Naive thymus-derived CD4-positive, alpha-beta T cell (primary cell): ENCODE measurements at regions of chr9 and their contacts with region 1.

Region 1: GRCh38 chr9:6008169-6008979 is 7.0 kb downstream of the RANBP6 start:
- DNase-seq: peak; percentile 79 to 98 (median 93)
- ATAC-seq: peak; percentile 84
- H3K4me3 ChIP-seq: peak overlapping the region; percentile 75
- H3K4me3 Mint-ChIP-seq: peak overlapping the region; percentile 74 to 99 (median 94)
- H3K27ac ChIP-seq: peak overlapping the region; percentile 97
- H3K27ac Mint-ChIP-seq: peak overlapping the region; percentile 83 to 97 (median 91)
- H3K4me1 ChIP-seq: peaks cover 20 to 36% of the 10 kb centered on the region in 2 donors
- H3K4me1 Mint-ChIP-seq: peaks cover 26 to 75% (median 65%) of the 10 kb centered on the region in 7 donors
- H3K27me3 ChIP-seq: no peaks in the 10 kb centered on the region
- H3K27me3 Mint-ChIP-seq: no peaks in the 10 kb centered on the region

Region 2: DNA sequence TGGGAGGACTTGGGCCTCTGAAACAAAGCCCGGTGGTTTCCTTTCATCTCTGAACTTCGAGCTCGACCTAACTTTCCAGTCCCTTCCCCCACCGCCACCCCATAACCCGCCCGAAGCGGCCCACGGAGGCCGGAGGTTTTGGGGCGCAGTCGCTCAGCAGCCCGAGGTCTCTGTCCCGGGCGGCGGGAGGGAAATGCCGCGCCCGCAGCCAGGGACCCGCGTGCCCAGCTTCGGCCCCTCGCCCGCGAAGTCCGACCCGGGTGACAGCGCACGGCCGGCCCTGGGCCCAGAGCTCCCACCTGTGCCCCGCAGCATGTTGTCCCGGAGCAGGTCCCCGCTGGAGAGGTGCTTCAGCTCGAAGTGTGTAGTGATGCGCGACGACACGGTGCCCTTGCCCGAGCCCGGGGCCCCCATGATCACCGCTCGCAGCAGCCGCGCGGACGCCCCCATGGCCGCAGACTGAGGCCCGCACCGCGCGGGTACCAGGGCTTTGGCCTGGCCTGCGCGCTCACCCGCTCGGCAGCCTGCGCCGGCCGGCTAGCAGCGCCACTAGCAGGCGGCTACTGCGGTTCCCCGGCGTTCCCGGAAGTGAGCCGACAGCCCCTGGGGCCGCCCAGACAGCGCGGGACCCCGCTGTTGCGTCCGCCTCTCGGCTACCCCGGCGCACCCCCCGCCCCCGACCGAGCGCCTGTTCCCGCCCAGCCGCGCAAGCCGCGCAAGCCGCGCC is 1267.6 kb before region 1 on chr9 and contains the start of gene AK3:
- CTCF ChIA-PET with region 1: no interaction called
- POLR2A ChIA-PET with region 1: no interaction called
- intact Hi-C with region 1: loop called (anchors 1 to 5 kb)
- DNase-seq: peak; percentile 72 to 85 (median 83)
- ATAC-seq: peak; percentile 95
- H3K4me3 ChIP-seq: peak within 1 kb of the TSS; percentile 73
- H3K4me3 Mint-ChIP-seq: peak within 1 kb of the TSS; percentile 88 to 99 (median 94)
- H3K27ac ChIP-seq: peak within 1 kb of the TSS; percentile 86
- H3K27ac Mint-ChIP-seq: peak within 1 kb of the TSS; percentile 86 to 98 (median 93)
- H3K4me1 ChIP-seq: peaks cover 10 to 16% of the 10 kb centered on the region in 2 donors
- H3K4me1 Mint-ChIP-seq: peaks cover 22 to 49% (median 40%) of the 10 kb centered on the region in 7 donors
- H3K27me3 ChIP-seq: no peaks in the 10 kb centered on the region
- H3K27me3 Mint-ChIP-seq: no peaks in the 10 kb centered on the region
- total RNA-seq, gene AK3: 18.0 to 34.8 (median 25.8) TPM

Region 3: DNA sequence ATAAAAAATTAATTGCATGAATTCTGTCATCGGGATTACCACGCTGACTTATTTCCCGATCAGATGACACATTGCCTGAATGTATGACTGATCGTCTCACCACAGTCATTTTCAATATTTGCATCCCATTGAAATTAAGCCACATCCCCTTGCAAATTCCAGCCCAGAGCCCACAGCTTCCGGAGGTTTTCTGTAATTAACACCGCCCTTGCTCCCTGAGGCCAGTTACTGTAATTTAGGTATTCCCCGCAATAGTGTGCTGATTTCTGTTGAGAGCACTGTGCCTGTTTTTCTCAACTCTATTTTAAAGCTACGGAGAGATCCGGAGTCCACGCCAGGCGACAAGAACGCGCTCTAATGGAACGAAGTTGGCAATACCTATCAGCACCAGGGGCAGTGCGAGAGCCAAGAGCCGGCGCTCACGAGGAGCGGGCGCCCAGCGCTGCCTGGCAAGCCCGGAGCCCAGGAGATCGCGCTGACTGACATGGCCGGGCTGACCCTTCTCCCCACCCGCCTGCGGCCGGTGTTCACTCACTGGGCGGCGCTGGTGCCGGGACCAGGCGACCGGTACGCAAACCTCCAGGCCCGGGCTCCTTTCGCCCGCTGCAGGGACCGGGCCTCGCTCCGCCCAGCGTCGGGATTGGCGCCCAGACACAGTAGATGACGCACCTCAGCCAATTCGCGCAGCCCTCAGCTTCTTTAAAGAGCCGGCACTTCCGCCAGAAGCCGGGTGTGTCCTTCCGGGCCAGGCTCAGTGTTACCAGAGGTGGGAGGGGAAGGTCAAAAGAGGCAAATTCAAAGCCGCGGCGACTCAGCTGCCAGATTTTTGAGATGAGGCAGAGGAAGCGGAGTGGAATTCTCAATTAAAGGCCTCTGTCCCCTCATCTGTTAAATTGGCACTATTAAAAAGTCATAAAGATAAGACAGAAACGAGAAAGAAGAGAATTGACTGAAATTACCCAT is 570.8 kb before region 1 on chr9 and contains the start of gene PLGRKT:
- CTCF ChIA-PET with region 1: no interaction called
- POLR2A ChIA-PET with region 1: no interaction called
- intact Hi-C with region 1: loop called (anchors 1 to 5 kb)
- DNase-seq: peak; percentile 77 to 91 (median 89)
- ATAC-seq: peak; percentile 96
- H3K4me3 ChIP-seq: peak within 1 kb of the TSS; percentile 84
- H3K4me3 Mint-ChIP-seq: peak within 1 kb of the TSS; percentile 86 to 98 (median 96)
- H3K27ac ChIP-seq: peak within 1 kb of the TSS; percentile 81
- H3K27ac Mint-ChIP-seq: peak within 1 kb of the TSS; percentile 90 to 100 (median 98)
- H3K4me1 ChIP-seq: peaks cover 18 to 19% of the 10 kb centered on the region in 2 donors
- H3K4me1 Mint-ChIP-seq: peaks cover 7 to 50% (median 36%) of the 10 kb centered on the region in 7 donors
- H3K27me3 ChIP-seq: no peaks in the 10 kb centered on the region
- H3K27me3 Mint-ChIP-seq: no peaks in the 10 kb centered on the region
- total RNA-seq, gene PLGRKT: 15.8 to 31.7 (median 16.8) TPM

Region 4: DNA sequence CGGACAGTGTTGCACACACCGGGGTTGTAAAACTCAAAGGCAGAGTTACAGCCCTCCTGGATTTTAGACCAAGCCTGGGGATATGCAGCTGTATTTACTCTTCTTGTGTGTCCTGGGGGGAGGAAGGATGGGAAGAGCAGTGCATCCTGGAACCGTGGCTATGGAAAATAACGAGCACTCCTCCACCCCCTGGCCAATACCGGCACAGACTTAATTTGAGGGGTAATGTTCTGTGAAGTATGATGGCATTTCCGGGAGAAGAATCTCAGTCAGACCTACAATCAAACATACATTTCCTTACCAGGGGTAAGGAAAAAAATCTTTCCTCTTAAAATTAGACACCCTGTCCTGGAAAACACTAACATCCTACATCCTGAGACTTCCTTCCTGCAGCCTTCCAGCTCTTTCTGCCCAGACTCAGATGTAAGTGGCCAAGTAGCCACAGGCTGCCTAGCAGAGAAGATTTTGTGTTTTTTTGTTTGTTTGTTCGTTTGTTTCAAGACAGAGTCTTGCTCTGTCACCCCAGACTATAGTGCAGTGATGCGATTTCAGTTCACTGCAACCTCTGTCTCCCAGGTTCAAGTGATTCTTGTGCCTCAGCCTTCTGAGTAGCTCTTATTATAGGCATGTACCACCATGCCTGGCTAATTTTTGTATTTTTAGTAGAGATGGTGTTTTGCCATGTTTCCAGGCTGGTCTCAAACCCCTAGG is 164.4 kb before region 1 on chr9:
- CTCF ChIA-PET with region 1: no interaction called
- POLR2A ChIA-PET with region 1: interaction called, 3 read pairs
- intact Hi-C with region 1: loop called in 1 of 2 experiments (anchors 2 kb)
- DNase-seq: peak in 2 of 9 donors; percentile 7 to 22
- ATAC-seq: peak; percentile 20
- H3K4me3 ChIP-seq: peak overlapping the region; percentile 5
- H3K4me3 Mint-ChIP-seq: peak overlapping the region; percentile 75 to 85 (median 80)
- H3K27ac ChIP-seq: peak overlapping the region; percentile 24
- H3K27ac Mint-ChIP-seq: peak overlapping the region; percentile 58 to 93 (median 91)
- H3K4me1 ChIP-seq: peaks cover 45 to 47% of the 10 kb centered on the region in 2 donors
- H3K4me1 Mint-ChIP-seq: peaks cover 50 to 83% (median 64%) of the 10 kb centered on the region in 7 donors
- H3K27me3 ChIP-seq: no peaks in the 10 kb centered on the region
- H3K27me3 Mint-ChIP-seq: no peaks in the 10 kb centered on the region

Region 5: DNA sequence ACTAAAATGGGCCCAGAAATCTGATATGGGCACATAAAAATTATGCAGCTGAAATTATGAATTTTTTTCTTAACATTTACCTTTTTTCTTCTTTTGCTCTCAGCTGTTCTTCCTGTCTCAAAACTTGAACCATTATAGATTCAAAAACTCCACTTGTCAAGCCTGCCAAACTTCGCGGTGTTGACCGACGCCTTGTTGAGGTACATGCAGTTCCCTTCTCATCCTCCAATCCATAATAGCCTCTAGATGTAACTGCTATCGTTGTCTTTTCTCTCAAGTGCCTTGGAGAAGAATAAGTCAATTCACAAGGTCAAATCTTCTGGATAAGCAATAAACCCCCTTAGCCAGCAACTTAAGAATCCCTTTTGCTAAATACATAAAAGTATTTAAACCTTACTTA is 20.1 kb before region 1 on chr9:
- CTCF ChIA-PET with region 1: no interaction called
- POLR2A ChIA-PET with region 1: interaction called, 5 read pairs
- intact Hi-C with region 1: loop called in 1 of 2 experiments (anchors 2 kb)
- DNase-seq: no peak
- ATAC-seq: no peak
- H3K4me3 ChIP-seq: no peak overlapping the region
- H3K4me3 Mint-ChIP-seq: no peak overlapping the region
- H3K27ac ChIP-seq: no peak overlapping the region
- H3K27ac Mint-ChIP-seq: no peak overlapping the region
- H3K4me1 ChIP-seq: no peaks in the 10 kb centered on the region
- H3K4me1 Mint-ChIP-seq: peaks cover 2 to 52% (median 36%) of the 10 kb centered on the region in 7 donors
- H3K27me3 ChIP-seq: no peaks in the 10 kb centered on the region
- H3K27me3 Mint-ChIP-seq: no peaks in the 10 kb centered on the region

Region 6: DNA sequence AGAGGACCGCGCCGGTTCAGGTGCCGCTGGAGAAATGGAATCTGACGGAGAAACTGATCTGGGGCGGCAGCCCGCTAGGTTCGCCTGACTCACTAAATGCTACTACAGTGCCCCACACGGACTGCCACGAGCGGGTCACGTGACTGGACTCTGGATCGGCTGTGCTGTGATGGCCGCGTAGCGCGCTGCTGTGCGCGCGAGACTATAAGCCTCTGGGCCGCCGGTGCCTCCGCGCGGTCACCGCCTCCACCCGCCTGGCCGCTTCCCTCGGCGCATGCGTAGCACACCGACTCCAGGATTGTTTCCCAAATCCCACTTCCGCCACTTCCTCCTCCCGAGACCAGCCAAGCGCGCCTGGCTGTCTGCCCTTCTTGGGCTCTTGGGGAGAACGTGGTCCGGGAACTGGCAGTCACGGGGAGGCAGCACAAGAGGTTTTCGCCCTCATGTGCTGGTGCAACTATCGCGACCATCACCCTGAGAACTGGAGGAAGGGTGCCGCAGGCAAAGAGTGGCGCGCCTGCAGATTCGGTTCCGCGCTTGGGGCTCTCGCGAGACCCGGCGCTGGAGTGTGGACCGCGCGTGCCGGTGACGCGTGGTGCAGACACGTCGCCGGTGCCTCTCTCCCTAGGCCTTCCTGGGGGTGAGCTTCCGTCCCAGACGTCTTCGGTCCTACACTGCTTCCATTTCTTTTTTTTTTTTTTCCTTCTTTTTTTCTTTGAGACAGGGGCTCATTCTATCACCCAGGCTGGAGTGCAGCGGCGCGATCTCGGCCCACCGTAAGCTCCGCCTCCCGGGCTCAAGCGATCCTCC is 673.0 kb after region 1 on chr9:
- CTCF ChIA-PET with region 1: no interaction called
- POLR2A ChIA-PET with region 1: interaction called, 8 read pairs
- intact Hi-C with region 1: loop called (anchors 1 kb)
- DNase-seq: peak; percentile 71 to 95 (median 90)
- ATAC-seq: peak; percentile 90
- H3K4me3 ChIP-seq: peak overlapping the region; percentile 89
- H3K4me3 Mint-ChIP-seq: peak overlapping the region; percentile 88 to 98 (median 95)
- H3K27ac ChIP-seq: peak overlapping the region; percentile 91
- H3K27ac Mint-ChIP-seq: peak overlapping the region; percentile 97 to 100 (median 99)
- H3K4me1 ChIP-seq: peaks cover 0 to 6% of the 10 kb centered on the region in 2 donors
- H3K4me1 Mint-ChIP-seq: peaks cover 7 to 31% (median 20%) of the 10 kb centered on the region in 7 donors
- H3K27me3 ChIP-seq: no peaks in the 10 kb centered on the region
- H3K27me3 Mint-ChIP-seq: no peaks in the 10 kb centered on the region